ENCODE measurements at regions of chr20 and their contacts with region 1.

Region 1: GRCh38 chr20:52312132-52312729 is 120.7 kb upstream of the ZFP64 start:
- DNase-seq: peak in 8 of 9 donors; percentile 35 to 76 (median 70)
- ATAC-seq: peak; percentile 85
- H3K4me3 ChIP-seq: no peak overlapping the region
- H3K4me3 Mint-ChIP-seq: peak overlapping the region in 2 of 10 donors; percentile 32 to 41
- H3K27ac ChIP-seq: no peak overlapping the region
- H3K27ac Mint-ChIP-seq: peak overlapping the region in 4 of 9 donors; percentile 21 to 57 (median 38)
- H3K4me1 ChIP-seq: peaks cover 0 to 8% of the 10 kb centered on the region in 2 donors
- H3K4me1 Mint-ChIP-seq: peaks cover 7 to 57% (median 40%) of the 10 kb centered on the region in 7 donors
- H3K27me3 ChIP-seq: no peaks in the 10 kb centered on the region
- H3K27me3 Mint-ChIP-seq: peaks cover 0 to 7% (median 0%) of the 10 kb centered on the region in 5 donors

Region 2: GRCh38 chr20:52242237-52243230 is 69.7 kb before region 1 on chr20:
- CTCF ChIA-PET with region 1: interaction called, 10 read pairs
- POLR2A ChIA-PET with region 1: no interaction called
- intact Hi-C with region 1: loop called in 1 of 2 experiments (anchors 1 kb)
- DNase-seq: peak in 6 of 9 donors; percentile 26 to 59 (median 45)
- ATAC-seq: peak; percentile 34
- H3K4me3 ChIP-seq: no peak overlapping the region
- H3K4me3 Mint-ChIP-seq: no peak overlapping the region
- H3K27ac ChIP-seq: no peak overlapping the region
- H3K27ac Mint-ChIP-seq: peak overlapping the region in 1 of 9 donors; percentile 22
- H3K4me1 ChIP-seq: no peaks in the 10 kb centered on the region
- H3K4me1 Mint-ChIP-seq: peaks cover 0 to 11% (median 2%) of the 10 kb centered on the region in 7 donors
- H3K27me3 ChIP-seq: no peaks in the 10 kb centered on the region
- H3K27me3 Mint-ChIP-seq: peaks cover 0 to 11% (median 2%) of the 10 kb centered on the region in 5 donors

Region 3: DNA sequence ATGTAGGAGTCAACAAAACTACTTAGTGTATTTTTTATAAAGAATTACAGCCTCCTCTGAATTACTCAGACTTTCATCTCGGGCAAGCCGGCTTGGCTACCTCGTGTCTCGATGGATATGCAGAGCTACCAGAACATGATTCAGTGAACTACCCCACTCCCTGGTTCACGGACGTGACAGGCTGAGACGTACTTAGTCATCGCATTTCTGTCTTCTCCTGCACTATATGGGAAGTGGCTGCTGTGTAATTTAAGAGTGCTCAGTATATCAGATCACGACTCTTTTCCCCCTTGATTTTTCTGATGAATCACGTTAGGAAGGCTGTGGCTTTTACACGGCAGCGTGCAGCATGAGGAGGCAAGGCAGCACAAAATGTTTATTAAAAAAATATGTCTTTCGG is 182.0 kb after region 1 on chr20:
- CTCF ChIA-PET with region 1: no interaction called
- POLR2A ChIA-PET with region 1: no interaction called
- intact Hi-C with region 1: loop called in 1 of 2 experiments (anchors 2 kb)
- DNase-seq: peak in 8 of 9 donors; percentile 2 to 32 (median 18)
- ATAC-seq: peak; percentile 51
- H3K4me3 ChIP-seq: no peak overlapping the region
- H3K4me3 Mint-ChIP-seq: peak overlapping the region; percentile 17 to 89 (median 73)
- H3K27ac ChIP-seq: no peak overlapping the region
- H3K27ac Mint-ChIP-seq: peak overlapping the region in 4 of 9 donors; percentile 28 to 72 (median 65)
- H3K4me1 ChIP-seq: peaks cover 0 to 17% of the 10 kb centered on the region in 2 donors
- H3K4me1 Mint-ChIP-seq: peaks cover 9 to 23% (median 20%) of the 10 kb centered on the region in 7 donors
- H3K27me3 ChIP-seq: no peaks in the 10 kb centered on the region
- H3K27me3 Mint-ChIP-seq: peaks cover 0 to 11% (median 6%) of the 10 kb centered on the region in 5 donors

Region 4: DNA sequence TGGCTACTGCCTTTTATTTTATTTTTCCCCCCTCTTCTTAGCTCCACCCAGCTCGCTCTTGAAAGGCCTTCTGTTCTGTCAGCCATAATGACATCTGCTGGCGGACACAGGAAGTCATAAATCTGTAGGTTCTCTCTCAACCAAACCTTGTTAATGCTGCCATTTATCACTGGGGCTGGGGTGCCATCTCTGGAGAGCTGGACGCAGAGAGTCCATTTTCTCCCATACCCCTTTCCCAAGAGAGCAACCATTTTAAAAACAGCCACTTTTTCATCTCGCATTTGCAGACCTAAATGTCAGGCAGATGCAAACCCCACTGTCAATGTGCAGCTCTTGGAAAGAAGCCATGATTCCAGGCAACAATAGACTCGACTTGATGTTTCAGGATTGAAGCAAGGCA is 646.9 kb after region 1 on chr20:
- CTCF ChIA-PET with region 1: interaction called, 3 read pairs
- POLR2A ChIA-PET with region 1: no interaction called
- intact Hi-C with region 1: loop called in 1 of 2 experiments (anchors 2 kb)
- DNase-seq: no peak
- ATAC-seq: no peak
- H3K4me3 ChIP-seq: no peak overlapping the region
- H3K4me3 Mint-ChIP-seq: no peak overlapping the region
- H3K27ac ChIP-seq: no peak overlapping the region
- H3K27ac Mint-ChIP-seq: peak overlapping the region in 2 of 9 donors; percentile 56 to 73
- H3K4me1 ChIP-seq: no peaks in the 10 kb centered on the region
- H3K4me1 Mint-ChIP-seq: peaks cover 0 to 12% (median 8%) of the 10 kb centered on the region in 7 donors
- H3K27me3 ChIP-seq: no peaks in the 10 kb centered on the region
- H3K27me3 Mint-ChIP-seq: peaks cover 0 to 12% (median under 1%) of the 10 kb centered on the region in 5 donors

Region 5: DNA sequence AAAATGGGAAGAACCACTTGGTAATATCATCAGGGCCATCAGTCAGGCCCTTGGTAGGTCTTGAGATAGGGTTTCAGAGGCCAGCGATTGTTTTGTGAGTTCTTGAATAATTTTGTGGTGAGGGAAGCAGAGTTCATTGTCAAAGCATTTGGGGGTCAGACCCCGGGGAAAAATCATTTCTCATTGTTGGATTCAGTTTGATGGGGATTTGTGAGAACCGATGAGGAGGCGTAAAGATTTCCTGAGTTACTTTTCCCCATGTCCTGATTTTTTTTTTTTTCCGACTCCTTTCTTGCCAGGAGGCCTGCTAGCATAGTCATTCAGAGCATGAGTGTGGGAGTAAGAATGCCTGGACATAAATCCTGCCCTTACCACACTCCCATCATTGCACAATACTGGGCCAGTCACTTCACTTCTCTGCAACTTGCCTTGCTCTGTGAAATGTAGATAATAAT is 720.3 kb after region 1 on chr20:
- CTCF ChIA-PET with region 1: interaction called, 14 read pairs
- POLR2A ChIA-PET with region 1: no interaction called
- intact Hi-C with region 1: loop called in 1 of 2 experiments (anchors 1 kb)
- DNase-seq: no peak
- ATAC-seq: no peak
- H3K4me3 ChIP-seq: no peak overlapping the region
- H3K4me3 Mint-ChIP-seq: no peak overlapping the region
- H3K27ac ChIP-seq: no peak overlapping the region
- H3K27ac Mint-ChIP-seq: peak overlapping the region in 3 of 9 donors; percentile 11 to 42 (median 31)
- H3K4me1 ChIP-seq: peaks cover 0 to 19% of the 10 kb centered on the region in 2 donors
- H3K4me1 Mint-ChIP-seq: peaks cover 22 to 70% (median 51%) of the 10 kb centered on the region in 7 donors
- H3K27me3 ChIP-seq: no peaks in the 10 kb centered on the region
- H3K27me3 Mint-ChIP-seq: peaks cover 0 to 7% (median 0%) of the 10 kb centered on the region in 5 donors

Region 6: DNA sequence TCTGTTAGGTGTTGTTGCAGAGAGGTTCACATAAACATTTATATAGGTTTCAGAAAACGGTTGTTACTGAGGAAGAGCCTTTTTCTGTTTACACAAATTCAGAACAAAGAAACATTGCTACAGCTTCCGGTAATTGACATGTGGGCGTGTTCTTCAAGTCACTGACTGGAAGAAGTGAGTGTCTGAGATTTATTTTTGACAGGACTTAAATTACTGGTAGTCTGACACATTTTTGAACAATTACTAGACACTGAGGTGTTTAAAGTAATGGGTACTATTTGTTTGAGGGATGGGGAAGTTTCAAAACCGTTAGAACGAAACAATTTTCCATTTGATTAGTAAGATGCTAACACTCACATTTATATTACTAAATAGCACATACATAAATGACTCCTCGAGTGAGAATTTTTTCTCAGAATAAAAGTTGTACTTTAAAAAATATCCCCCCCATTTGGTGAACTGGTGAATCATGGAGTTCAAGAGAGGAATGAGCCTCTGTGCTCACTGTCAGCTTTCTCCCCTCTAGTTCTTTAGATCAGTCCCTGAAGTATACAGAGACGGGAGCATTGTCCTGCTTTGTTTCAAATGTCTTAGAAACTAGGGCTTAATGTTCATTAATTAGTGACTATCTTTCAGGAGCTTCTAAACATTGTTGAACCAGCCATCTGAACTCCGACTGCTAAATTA is 758.6 kb after region 1 on chr20:
- CTCF ChIA-PET with region 1: no interaction called
- POLR2A ChIA-PET with region 1: no interaction called
- intact Hi-C with region 1: no loop called
- DNase-seq: peak in 4 of 9 donors; percentile 18 to 40 (median 37)
- ATAC-seq: peak; percentile 54
- H3K4me3 ChIP-seq: no peak overlapping the region
- H3K4me3 Mint-ChIP-seq: peak overlapping the region in 7 of 10 donors; percentile 9 to 61 (median 24)
- H3K27ac ChIP-seq: peak overlapping the region; percentile 4
- H3K27ac Mint-ChIP-seq: peak overlapping the region; percentile 44 to 94 (median 73)
- H3K4me1 ChIP-seq: peaks cover 0 to 13% of the 10 kb centered on the region in 2 donors
- H3K4me1 Mint-ChIP-seq: peaks cover 22 to 52% (median 44%) of the 10 kb centered on the region in 7 donors
- H3K27me3 ChIP-seq: no peaks in the 10 kb centered on the region
- H3K27me3 Mint-ChIP-seq: peaks cover 0 to 9% (median 0%) of the 10 kb centered on the region in 5 donors

Region 7: GRCh38 chr20:53939572-53940359 is 1627.5 kb after region 1 on chr20:
- CTCF ChIA-PET with region 1: interaction called, 4 read pairs
- POLR2A ChIA-PET with region 1: no interaction called
- intact Hi-C with region 1: loop called in 1 of 2 experiments (anchors 2 kb)
- DNase-seq: peak; percentile 35 to 62 (median 48)
- ATAC-seq: peak; percentile 82
- H3K4me3 ChIP-seq: no peak overlapping the region
- H3K4me3 Mint-ChIP-seq: peak overlapping the region in 3 of 10 donors; percentile 24 to 44 (median 30)
- H3K27ac ChIP-seq: no peak overlapping the region
- H3K27ac Mint-ChIP-seq: peak overlapping the region in 6 of 9 donors; percentile 2 to 79 (median 22)
- H3K4me1 ChIP-seq: peaks cover 15 to 24% of the 10 kb centered on the region in 2 donors
- H3K4me1 Mint-ChIP-seq: peaks cover 26 to 62% (median 44%) of the 10 kb centered on the region in 7 donors
- H3K27me3 ChIP-seq: no peaks in the 10 kb centered on the region
- H3K27me3 Mint-ChIP-seq: no peaks in the 10 kb centered on the region

Measured in naive thymus-derived CD4-positive, alpha-beta T cell (primary cell).